ENCODE measurements at regions of chr11 and their contacts with region 1.

Region 1: DNA sequence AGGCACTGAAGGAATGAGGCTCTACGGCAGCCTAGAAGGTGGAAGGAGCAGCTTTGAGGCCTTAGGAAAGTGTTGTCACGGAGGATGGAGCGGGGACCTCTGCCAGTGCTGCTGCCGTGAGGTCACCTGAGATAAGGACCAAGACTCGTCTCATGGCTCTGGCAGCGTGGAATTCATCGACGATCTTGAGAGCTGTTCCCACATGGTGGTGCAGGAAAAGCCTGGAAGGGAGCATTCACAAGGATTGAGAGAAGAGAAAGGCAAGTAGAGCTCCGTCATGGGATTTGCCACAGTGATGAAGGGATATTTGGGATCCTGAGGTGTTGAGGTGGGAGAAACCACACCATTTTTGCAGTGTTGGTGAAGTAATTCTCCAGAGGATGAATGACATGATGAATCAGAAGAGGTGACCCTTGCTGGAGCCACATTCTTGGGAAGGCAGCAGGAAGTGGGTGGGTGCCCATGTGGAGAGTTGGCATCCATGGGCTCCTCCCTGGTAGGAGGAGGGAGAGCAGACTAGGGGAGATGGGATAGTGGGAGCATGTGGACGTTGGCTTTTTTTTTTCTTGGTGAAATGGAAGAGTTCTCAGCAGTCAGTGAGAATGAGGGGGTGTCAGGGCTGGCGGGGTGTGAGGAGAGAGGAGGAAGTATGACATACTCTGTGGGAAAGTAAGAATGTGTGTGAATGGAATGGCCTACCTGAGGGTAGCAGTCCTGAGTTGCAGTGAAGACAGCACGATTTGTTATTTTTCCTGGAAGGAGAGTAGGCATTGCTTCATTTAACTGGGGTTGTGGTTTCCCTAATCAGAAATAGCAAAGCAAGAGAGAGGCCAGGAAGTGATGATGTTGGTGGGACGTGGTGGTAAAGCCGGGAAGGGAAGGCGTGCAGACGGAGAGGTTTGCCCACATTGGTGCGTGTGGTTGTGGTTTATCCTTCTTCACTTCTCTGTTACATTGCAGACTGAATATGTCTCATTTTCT is 11.1 kb downstream of the PPP6R3 start:
- DNase-seq: no peak
- ATAC-seq: peak; percentile 43
- H3K4me3 ChIP-seq: no peak overlapping the region
- H3K27ac ChIP-seq: no peak overlapping the region
- H3K4me1 ChIP-seq: peaks cover 22% of the 10 kb centered on the region
- H3K27me3 ChIP-seq: no peaks in the 10 kb centered on the region
- CTCF ChIP-seq: no peak

Region 2: DNA sequence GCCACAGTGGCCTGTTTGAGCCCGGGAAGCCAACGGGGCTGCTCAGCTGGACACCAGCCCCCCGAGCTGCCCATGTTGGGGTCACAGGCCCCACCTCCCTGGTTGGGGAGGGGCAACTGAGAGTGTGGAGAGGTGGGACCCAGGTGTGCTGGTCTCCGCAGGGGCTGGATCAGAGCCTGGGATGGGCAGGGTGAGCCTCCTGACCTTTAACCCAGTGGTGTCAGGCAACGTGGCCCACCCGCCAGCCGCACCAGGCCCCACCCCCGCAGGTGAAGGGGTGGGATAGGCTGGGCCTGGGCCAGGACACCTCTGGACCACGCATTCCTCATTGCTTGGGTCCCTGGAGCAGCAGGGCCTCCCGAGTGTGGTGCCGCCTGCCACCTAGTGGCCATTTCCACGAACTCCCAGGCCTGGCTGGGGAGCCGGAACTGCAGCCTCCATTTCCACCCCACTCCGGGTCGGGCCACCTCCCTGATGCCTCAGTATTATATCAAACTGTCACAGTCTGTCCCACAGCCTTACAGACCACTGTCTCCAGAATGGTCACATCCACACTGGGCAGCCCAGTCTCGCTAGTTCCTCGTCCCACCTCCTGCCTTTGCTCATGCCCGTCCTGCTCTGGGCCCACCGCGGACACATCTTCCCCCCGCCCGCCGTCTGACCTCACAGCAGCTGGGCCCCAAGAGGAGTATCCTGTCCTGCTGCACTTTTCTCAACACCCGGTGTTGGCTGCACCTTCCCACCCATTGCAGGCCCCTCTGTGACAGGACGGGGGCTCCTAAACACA is 24.4 kb before region 1 on chr11:
- CTCF ChIA-PET with region 1: interaction called, 12 read pairs
- POLR2A ChIA-PET with region 1: no interaction called
- in situ Hi-C with region 1: no loop called
- intact Hi-C with region 1: no loop called
- DNase-seq: peak; percentile 20
- ATAC-seq: peak; percentile 95
- H3K4me3 ChIP-seq: no peak overlapping the region
- H3K27ac ChIP-seq: no peak overlapping the region
- H3K4me1 ChIP-seq: peaks cover 4% of the 10 kb centered on the region; the same call in 1 of the 2 replicates
- H3K27me3 ChIP-seq: no peaks in the 10 kb centered on the region
- CTCF ChIP-seq: peak; percentile 98

Region 3: DNA sequence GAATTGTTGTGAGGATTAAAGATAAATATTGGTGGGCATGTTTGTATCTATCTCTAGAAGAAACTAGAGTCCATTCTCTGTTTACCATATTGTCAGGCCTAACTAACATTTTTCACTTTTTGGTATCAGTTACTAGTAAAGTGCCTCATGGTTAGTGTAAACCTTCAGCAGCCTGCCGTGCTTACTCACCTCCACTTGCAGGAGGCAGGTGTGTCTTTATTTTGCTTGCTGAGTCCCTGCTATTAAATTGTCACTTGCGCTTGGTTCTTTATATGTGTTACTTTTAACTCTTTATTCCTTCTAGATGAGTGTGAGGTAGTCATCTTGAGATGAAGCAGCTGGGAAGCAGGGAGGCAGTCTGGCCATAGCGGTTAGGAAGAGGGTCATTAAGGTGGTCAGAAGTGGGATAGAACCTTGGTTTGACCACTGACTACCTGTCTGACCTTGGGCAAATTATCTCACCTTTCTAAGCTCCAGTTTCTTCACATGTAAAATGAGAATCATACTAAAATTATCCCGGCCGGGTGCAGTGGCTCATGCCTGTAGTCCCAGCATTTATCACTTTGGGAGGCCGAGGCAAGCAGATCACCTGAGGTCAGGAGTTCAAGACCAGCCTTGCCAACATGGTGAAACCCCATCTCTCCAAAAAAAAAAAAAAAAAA is 10.1 kb after region 1 on chr11:
- CTCF ChIA-PET with region 1: no interaction called
- POLR2A ChIA-PET with region 1: interaction called, 13 read pairs
- in situ Hi-C with region 1: no loop called
- intact Hi-C with region 1: no loop called
- DNase-seq: no peak
- ATAC-seq: peak; percentile 31; the same call in 1 of the 2 replicates
- H3K4me3 ChIP-seq: no peak overlapping the region
- H3K27ac ChIP-seq: no peak overlapping the region
- H3K4me1 ChIP-seq: peaks cover 12% of the 10 kb centered on the region
- H3K27me3 ChIP-seq: no peaks in the 10 kb centered on the region
- CTCF ChIP-seq: no peak

Region 4: GRCh38 chr11:68542617-68543016 is 71.0 kb after region 1 on chr11:
- CTCF ChIA-PET with region 1: no interaction called
- POLR2A ChIA-PET with region 1: no interaction called
- in situ Hi-C with region 1: no loop called
- intact Hi-C with region 1: no loop called
- DNase-seq: no peak
- ATAC-seq: no peak
- H3K4me3 ChIP-seq: no peak overlapping the region
- H3K27ac ChIP-seq: no peak overlapping the region
- H3K4me1 ChIP-seq: no peaks in the 10 kb centered on the region
- H3K27me3 ChIP-seq: no peaks in the 10 kb centered on the region
- CTCF ChIP-seq: no peak

Measured in Panc1 (cell line).